Stomach (tissue), 19 donors: ENCODE measurements at regions of chr2 and their contacts with region 1.

Region 1: GRCh38 chr2:64812285-64812684 is 158.6 kb upstream of the SERTAD2 start:
- DNase-seq: peak in 1 of 2 donors; percentile 47
- H3K4me3 ChIP-seq: no peak overlapping the region
- H3K27ac ChIP-seq: no peak overlapping the region
- H3K4me1 ChIP-seq: peaks cover 0 to 4% (median 0%) of the 10 kb centered on the region in 4 donors
- H3K27me3 ChIP-seq: no peaks in the 10 kb centered on the region
- CTCF ChIP-seq: no peak
- EP300 ChIP-seq: no peak
- POLR2A ChIP-seq: no peak

Region 2: DNA sequence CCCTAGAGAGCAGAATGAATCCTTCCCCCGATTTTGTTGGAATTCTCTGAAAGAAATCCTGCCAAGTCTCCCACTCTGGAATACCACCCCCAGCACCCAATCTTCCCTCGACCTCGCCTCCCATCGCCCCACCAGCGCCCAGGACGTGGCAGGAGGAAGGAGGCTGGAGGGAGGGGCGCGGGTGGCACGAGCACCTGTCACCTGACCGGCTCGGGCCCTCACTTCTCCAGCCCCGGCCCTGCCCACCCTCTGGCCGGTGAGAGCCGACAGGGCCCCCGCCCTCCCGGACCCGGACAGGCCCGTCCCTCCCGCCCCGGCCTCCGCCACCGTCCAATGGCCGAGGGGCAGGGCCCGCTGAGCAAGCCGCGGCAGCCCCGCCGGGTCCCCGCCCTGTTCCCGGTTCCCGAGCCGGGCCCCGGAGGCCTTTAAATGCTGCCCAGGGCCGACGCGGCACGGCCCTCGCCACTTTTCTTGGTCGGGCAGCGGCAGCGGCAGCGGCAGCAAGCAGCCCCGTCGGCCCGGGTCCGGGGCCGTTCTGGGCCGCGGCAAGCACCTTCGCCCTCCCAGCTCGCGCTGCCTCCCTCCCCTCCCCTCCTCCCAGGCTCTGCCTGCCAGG is 358.4 kb before region 1 on chr2 and contains the start of gene LGALSL:
- intact Hi-C with region 1: no loop called
- DNase-seq: peak; percentile 90 to 95
- H3K4me3 ChIP-seq: peak within 1 kb of the TSS; percentile 78 to 86 (median 84)
- H3K27ac ChIP-seq: peak within 1 kb of the TSS; percentile 91 to 99 (median 92)
- H3K4me1 ChIP-seq: peaks cover 10 to 29% (median 18%) of the 10 kb centered on the region in 4 donors
- H3K27me3 ChIP-seq: no peaks in the 10 kb centered on the region
- CTCF ChIP-seq: no peak
- EP300 ChIP-seq: no peak
- POLR2A ChIP-seq: no peak
- total RNA-seq, gene LGALSL: 4.1 to 19.5 (median 8.8) TPM

Region 3: DNA sequence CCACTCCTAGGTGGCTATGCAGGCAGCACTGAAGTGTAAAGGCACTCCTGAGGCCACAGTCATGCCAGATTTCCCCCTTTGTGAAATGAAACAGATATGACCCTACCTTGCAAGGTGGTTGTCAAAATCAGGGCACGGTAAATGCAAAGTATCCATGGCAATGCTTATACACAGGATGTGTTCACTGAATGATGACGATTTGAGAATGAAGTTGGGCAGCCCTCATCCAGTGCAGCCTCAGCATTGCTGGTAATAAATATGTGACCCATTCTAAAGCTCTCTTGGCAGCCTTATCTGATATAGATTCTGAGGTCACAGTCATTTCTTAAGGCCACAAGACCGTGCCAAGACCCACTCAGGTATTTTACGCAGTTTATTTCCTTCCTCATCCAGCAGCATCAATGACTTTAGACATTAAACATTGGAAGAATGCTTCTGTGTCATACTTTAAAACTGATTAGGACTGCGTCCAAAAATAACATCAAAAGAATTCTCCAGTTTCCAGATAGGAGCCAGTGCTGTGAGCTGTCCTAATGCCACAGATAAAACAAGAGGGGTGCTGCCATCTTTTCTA is 33.1 kb before region 1 on chr2:
- intact Hi-C with region 1: loop called (anchors 5 kb)
- DNase-seq: no peak
- H3K4me3 ChIP-seq: no peak overlapping the region
- H3K27ac ChIP-seq: no peak overlapping the region
- H3K4me1 ChIP-seq: peaks cover 0 to 14% (median 5%) of the 10 kb centered on the region in 4 donors
- H3K27me3 ChIP-seq: no peaks in the 10 kb centered on the region
- CTCF ChIP-seq: no peak
- EP300 ChIP-seq: no peak
- POLR2A ChIP-seq: no peak

Region 4: DNA sequence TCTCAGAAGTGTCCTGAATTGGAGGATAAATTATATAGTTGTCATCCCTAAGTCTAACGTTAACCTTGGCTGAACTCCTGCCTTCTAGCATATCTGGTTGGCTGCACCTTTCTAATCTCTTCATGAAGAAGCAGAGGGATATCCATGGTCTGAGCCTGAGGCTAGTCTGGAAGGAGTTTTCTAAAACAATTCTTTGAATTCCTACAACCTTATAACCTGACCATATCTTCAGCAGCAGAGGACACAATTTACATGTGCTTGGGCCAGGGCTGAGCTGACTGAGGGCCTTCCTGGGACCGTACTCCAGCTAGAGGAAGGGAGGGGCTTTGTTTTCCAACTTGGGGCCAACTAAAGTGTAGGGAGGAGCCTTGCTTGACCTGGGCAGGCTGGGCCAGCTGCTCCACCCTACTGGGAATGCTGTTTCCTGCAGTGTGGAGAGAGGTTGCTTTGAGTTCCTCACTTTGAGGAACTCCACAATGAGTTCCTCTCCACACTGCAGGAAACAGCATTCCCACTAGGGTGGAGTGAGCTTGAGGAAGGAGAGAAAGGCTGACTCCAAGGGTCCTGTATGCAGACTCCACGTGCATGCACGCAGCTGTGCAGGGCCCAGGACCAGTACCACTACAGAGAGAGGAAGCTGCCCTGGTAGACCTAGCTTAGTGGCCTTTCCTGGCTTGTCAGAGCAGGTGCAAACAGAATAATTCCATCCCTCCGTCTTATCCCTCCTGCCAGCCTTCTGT is 263.5 kb after region 1 on chr2:
- intact Hi-C with region 1: no loop called
- DNase-seq: peak; percentile 66 to 82
- H3K4me3 ChIP-seq: no peak overlapping the region
- H3K27ac ChIP-seq: peak overlapping the region; percentile 45 to 84 (median 72)
- H3K4me1 ChIP-seq: peaks cover 22 to 49% (median 38%) of the 10 kb centered on the region in 4 donors
- H3K27me3 ChIP-seq: no peaks in the 10 kb centered on the region
- CTCF ChIP-seq: no peak
- EP300 ChIP-seq: no peak
- POLR2A ChIP-seq: no peak